CD14-positive monocyte (primary cell): ENCODE measurements at regions of chr17 and their contacts with region 1.

Region 1: GRCh38 chr17:82205719-82206508 is 6.7 kb downstream of the CCDC57 start:
- DNase-seq: peak; percentile 82 to 86 (median 86)
- H3K4me3 ChIP-seq: peak overlapping the region in 1 of 3 experiments; percentile 45
- H3K4me3 Mint-ChIP-seq: peak overlapping the region; percentile 31 to 55
- H3K27ac ChIP-seq: peak overlapping the region; percentile 65 to 86
- H3K27ac Mint-ChIP-seq: peak overlapping the region; percentile 87 to 95 (median 92)
- H3K4me1 ChIP-seq: peaks cover 16 to 21% of the 10 kb centered on the region in 2 donors
- H3K4me1 Mint-ChIP-seq: peaks cover 21% of the 10 kb centered on the region
- H3K27me3 ChIP-seq: no peaks in the 10 kb centered on the region
- H3K27me3 Mint-ChIP-seq: peaks cover 0 to 4% (median 0%) of the 10 kb centered on the region in 3 donors
- CTCF ChIP-seq: peak; percentile 97

Region 2: GRCh38 chr17:82236142-82236981 is 30.4 kb after region 1 on chr17:
- intact Hi-C with region 1: loop called (anchors 5 kb)
- DNase-seq: peak; percentile 65 to 71 (median 66)
- H3K4me3 ChIP-seq: peak overlapping the region in 1 of 3 experiments; percentile 35
- H3K4me3 Mint-ChIP-seq: peak overlapping the region in 1 of 2 donors; percentile 27
- H3K27ac ChIP-seq: peak overlapping the region; percentile 36 to 61
- H3K27ac Mint-ChIP-seq: peak overlapping the region in 3 of 7 donors; percentile 71 to 74 (median 74)
- H3K4me1 ChIP-seq: peaks cover 95 to 100% of the 10 kb centered on the region in 2 donors
- H3K4me1 Mint-ChIP-seq: peaks cover 81% of the 10 kb centered on the region
- H3K27me3 ChIP-seq: no peaks in the 10 kb centered on the region
- H3K27me3 Mint-ChIP-seq: no peaks in the 10 kb centered on the region
- CTCF ChIP-seq: peak; percentile 93